MCF 10A (cell line): ENCODE measurements at regions of chr11 and their contacts with region 1.

Region 1: DNA sequence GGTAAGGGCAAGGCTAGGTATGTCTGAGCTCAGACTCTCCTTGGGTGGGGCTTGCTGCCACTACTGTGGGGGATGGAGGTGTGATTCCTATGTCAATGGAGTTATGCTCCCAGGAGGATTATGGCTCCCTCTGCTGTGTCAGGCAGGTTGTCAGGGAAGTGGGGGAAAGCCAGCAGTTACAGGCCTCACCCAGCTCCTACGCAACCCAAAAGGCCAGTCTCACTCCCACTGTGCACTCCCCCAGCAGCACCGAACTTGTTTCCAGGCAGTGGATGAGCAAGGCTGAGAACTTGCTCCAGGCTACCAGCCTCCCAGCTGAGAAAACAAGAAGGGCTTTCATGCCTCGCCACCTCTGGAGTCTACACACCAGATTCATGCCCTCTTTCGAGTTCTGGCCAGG is 18.2 kb downstream of the C11orf91 start:
- DNase-seq: peak; percentile 48
- H3K4me3 Mint-ChIP-seq: no peak overlapping the region
- H3K27ac Mint-ChIP-seq: no peak overlapping the region
- H3K4me1 Mint-ChIP-seq: no peaks in the 10 kb centered on the region
- H3K27me3 Mint-ChIP-seq: peaks cover 12% of the 10 kb centered on the region
- CTCF ChIP-seq: peak; percentile 25

Region 2: GRCh38 chr11:33362051-33362910 is 320.2 kb before region 1 on chr11:
- CTCF ChIA-PET with region 1: interaction called, 175 read pairs
- POLR2A ChIA-PET with region 1: interaction called, 3 read pairs
- intact Hi-C with region 1: no loop called
- DNase-seq: peak; percentile 50
- H3K4me3 Mint-ChIP-seq: no peak overlapping the region
- H3K27ac Mint-ChIP-seq: no peak overlapping the region
- H3K4me1 Mint-ChIP-seq: no peaks in the 10 kb centered on the region
- H3K27me3 Mint-ChIP-seq: no peaks in the 10 kb centered on the region
- CTCF ChIP-seq: peak; percentile 50

Region 3: DNA sequence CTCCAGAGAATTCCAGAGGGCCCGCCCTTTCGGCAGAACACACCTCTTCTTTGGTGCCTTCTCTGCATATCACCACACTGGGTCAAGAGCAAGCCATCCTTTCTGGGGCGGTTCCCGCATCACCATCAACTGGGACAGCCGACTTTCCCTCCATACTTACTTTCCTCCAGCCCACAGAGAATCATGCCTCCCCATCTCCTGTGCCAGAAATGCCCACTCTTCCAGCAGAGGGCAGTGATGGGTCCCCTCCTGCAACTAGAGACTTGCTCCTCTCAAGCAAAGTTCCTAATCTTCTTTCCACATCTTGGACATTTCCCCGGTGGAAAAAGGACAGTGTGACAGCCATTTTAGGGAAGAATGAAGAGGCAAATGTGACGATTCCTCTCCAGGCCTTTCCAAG is 139.5 kb before region 1 on chr11:
- CTCF ChIA-PET with region 1: interaction called, 3 read pairs
- POLR2A ChIA-PET with region 1: no interaction called
- intact Hi-C with region 1: loop called (anchors 1 kb)
- DNase-seq: peak; percentile 65
- H3K4me3 Mint-ChIP-seq: no peak overlapping the region
- H3K27ac Mint-ChIP-seq: no peak overlapping the region
- H3K4me1 Mint-ChIP-seq: no peaks in the 10 kb centered on the region
- H3K27me3 Mint-ChIP-seq: peaks cover 26% of the 10 kb centered on the region
- CTCF ChIP-seq: peak; percentile 38

Region 4: GRCh38 chr11:33790040-33790439 is 107.6 kb after region 1 on chr11:
- CTCF ChIA-PET with region 1: no interaction called
- POLR2A ChIA-PET with region 1: no interaction called
- intact Hi-C with region 1: no loop called
- DNase-seq: no peak
- H3K4me3 Mint-ChIP-seq: no peak overlapping the region
- H3K27ac Mint-ChIP-seq: no peak overlapping the region
- H3K4me1 Mint-ChIP-seq: no peaks in the 10 kb centered on the region
- H3K27me3 Mint-ChIP-seq: peaks cover 77% of the 10 kb centered on the region
- CTCF ChIP-seq: no peak